ENCODE measurements at regions of chr3 and their contacts with region 1.

Region 1: GRCh38 chr3:129934234-129935123 is 40.0 kb upstream of the TRH start:
- DNase-seq: peak in 1 of 2 donors; percentile 31
- ATAC-seq: no peak

Region 2: GRCh38 chr3:129490242-129491045 is 444.0 kb before region 1 on chr3:
- intact Hi-C with region 1: loop called in 1 of 2 experiments (anchors 10 kb)
- DNase-seq: peak; percentile 70 to 81
- ATAC-seq: peak; percentile 97

Region 3: GRCh38 chr3:129650256-129650872 is 284.1 kb before region 1 on chr3:
- intact Hi-C with region 1: loop called in 1 of 2 experiments (anchors 2 kb)
- DNase-seq: peak; percentile 44 to 69
- ATAC-seq: peak; percentile 77

Measured in left colon (tissue), 2 donors.